Activated CD4-positive, alpha-beta memory T cell treated with anti-CD3 and anti-CD28 coated beads for 36 hours (primary cell): ENCODE measurements at regions of chr14 and their contacts with region 1.

Region 1: GRCh38 chr14:50736932-50737419 is 68.9 kb upstream of the SAV1 start:
- DNase-seq: peak; percentile 66
- H3K4me3 Mint-ChIP-seq: no peak overlapping the region
- H3K27ac Mint-ChIP-seq: no peak overlapping the region
- H3K4me1 Mint-ChIP-seq: peaks cover 43% of the 10 kb centered on the region
- H3K27me3 Mint-ChIP-seq: no peaks in the 10 kb centered on the region

Region 2: DNA sequence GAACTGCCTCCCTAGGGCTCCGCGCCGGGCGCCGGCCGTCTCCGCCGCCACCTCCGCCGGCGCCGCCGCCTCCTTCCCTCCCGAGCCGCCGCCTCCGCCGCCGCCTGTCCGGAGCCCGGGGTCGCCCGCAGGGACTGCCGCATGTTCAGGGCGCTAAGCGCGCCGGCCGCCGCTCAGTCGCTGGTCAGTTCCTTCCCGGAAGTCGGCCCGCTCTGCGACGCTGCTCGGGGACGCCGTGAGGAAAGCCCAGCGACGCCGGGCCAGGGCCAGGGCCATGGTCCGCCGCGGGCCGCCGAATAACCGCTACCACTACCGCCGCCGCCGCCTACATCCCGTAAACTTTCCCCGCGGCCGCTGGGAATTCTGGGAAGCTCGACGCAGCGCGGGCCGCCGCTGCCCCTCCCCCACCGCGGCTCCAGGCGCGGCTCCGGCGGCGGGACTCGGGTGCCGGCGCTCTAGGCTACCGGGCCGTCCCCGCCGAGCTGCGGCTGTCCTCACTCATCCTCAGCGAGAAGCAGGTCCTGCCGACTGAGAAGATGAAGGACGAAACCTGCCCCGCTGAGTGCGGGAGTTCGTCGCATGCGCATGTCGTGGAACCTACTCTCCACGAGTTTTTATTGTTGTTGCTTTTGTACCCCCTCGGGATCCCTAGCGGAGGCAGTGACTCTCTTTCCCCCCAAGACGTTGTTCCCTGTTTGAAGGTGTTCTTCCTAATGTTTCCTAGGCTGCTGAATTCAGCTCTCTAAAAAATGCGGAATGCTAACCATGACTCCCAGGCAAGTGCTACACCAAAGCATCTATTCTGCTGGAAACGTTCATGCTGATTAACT is 68.8 kb before region 1 on chr14 and contains the start of gene SAV1:
- CTCF ChIA-PET with region 1: no interaction called
- POLR2A ChIA-PET with region 1: interaction called, 4 read pairs
- intact Hi-C with region 1: loop called (anchors 2 kb)
- DNase-seq: peak; percentile 67
- H3K4me3 Mint-ChIP-seq: no peak within 1 kb of the TSS
- H3K27ac Mint-ChIP-seq: peak within 1 kb of the TSS; percentile 63
- H3K4me1 Mint-ChIP-seq: peaks cover 18% of the 10 kb centered on the region
- H3K27me3 Mint-ChIP-seq: no peaks in the 10 kb centered on the region
- total RNA-seq, gene SAV1: 13.4 to 13.5 TPM

Region 3: GRCh38 chr14:50762001-50762930 is 25.3 kb after region 1 on chr14:
- CTCF ChIA-PET with region 1: interaction called, 7 read pairs
- POLR2A ChIA-PET with region 1: interaction called, 11 read pairs
- intact Hi-C with region 1: loop called (anchors 1 kb)
- DNase-seq: peak; percentile 77
- H3K4me3 Mint-ChIP-seq: no peak overlapping the region
- H3K27ac Mint-ChIP-seq: peak overlapping the region; percentile 24
- H3K4me1 Mint-ChIP-seq: peaks cover 25% of the 10 kb centered on the region
- H3K27me3 Mint-ChIP-seq: no peaks in the 10 kb centered on the region

Region 4: DNA sequence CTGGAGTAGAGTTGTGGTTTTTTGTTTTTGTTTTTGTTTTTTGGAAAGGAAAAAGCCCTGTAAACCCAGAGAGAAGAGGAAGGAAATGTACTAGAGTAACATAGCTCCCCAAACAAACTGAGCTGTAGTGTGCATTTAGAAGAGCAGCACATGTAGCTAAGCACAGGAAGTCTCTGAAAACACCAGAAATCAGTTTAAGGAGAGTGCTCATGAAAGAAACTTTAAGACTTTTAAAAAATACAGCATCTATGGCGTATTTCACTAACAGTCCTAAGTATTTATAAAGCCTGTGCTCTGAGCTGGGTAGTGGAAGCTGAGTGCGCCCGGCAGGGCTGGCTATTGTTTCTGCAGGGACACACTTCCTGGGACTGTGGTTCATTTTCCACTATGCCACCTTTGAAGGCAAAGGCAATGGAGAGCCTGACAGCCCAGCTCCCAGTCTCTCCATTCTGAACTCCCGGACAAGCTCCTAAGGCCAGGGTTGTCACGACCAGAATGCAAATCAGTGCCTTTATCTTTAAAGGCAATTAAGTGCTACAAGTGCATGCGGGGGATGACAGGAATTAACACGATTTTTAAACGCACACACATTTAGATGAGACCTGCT is 48.6 kb after region 1 on chr14:
- CTCF ChIA-PET with region 1: interaction called, 4 read pairs
- POLR2A ChIA-PET with region 1: interaction called, 3 read pairs
- intact Hi-C with region 1: loop called (anchors 2 kb)
- DNase-seq: no peak
- H3K4me3 Mint-ChIP-seq: no peak overlapping the region
- H3K27ac Mint-ChIP-seq: no peak overlapping the region
- H3K4me1 Mint-ChIP-seq: peaks cover 55% of the 10 kb centered on the region
- H3K27me3 Mint-ChIP-seq: no peaks in the 10 kb centered on the region